ENCODE measurements at regions of chr1 and their contacts with region 1.

Region 1: DNA sequence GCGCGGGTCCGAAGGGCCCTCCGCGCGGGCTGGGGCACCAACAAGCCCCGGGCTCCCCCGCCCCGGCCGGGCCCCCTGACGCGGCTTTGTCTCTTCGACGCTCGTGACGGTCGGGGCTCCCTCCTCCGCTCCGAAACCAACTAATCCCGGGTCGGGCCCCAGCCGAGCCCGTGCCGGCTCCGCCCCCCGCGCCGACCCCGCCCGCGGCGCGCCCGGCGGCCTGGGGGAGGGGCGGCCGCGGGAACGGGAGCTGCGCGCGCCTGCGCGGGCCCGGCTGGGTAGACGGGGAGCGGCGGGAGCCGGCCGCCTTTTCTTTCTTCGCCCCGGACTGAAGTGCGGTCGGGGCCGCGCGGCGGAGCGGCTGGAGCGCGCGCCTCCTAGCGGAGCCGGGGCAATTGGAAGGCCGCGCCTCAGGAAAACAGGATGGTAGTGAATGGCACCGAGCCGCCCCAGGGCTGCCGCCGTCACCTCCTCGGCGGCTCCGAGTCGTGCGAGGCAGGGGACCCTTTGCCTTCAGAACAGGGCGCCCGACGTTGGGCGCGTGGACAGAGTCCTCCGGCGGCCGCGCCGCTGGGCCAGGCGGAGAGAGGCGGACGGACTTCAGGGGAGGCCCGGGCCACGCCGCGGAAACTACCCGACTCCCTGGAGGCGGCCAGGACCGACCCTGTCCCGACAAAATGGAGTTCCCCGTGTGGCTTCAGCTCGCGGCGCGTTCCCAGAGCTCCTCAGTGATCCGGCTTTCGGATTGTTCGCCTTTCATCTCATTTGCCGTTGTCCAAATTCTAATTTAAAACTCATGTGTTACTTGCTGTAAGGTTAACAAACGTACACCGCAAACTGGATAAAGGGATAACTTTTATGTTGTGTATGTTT is at the start of gene TP53BP2:
- DNase-seq: peak; percentile 85
- H3K4me3 ChIP-seq: peak within 1 kb of the TSS; percentile 80
- H3K27ac ChIP-seq: peak within 1 kb of the TSS; percentile 67
- H3K4me1 ChIP-seq: peaks cover 26% of the 10 kb centered on the region
- CTCF ChIP-seq: peak; percentile 69
- total RNA-seq, gene TP53BP2: 19.7 and 21.7 TPM in 2 replicates

Region 2: DNA sequence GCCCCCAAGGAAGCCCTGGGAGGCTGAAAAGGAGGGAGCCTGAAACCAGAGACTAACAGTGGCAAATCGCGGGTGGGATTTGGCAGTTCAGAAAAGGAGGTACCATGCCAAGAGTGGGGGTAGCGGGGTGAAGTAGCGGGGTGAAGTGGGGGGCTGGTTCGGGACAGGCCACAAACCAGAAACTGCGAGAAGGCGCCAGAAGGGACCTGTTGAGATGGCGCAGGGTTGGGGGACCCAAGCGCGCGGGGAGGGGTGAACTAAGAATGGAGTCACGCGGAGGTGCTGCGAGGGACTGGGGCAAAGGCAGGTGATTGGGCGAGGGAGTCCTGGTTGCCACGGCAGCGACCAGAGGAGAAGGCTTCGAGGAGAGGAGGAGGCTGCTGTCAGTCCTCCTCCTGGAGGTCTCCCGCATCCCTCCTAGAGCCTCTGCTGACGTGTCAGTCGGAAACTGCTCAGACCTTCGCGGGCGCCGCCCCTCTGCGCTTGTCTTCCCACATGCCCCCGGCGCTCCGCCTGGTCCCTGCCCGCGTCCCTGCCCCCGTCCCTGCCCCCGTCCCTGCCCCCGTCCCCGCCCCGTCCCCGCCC is 1228.6 kb before region 1 on chr1:
- CTCF ChIA-PET with region 1: no interaction called
- POLR2A ChIA-PET with region 1: no interaction called
- intact Hi-C with region 1: no loop called
- DNase-seq: peak; percentile 90
- H3K4me3 ChIP-seq: peak overlapping the region; percentile 73
- H3K27ac ChIP-seq: no peak overlapping the region
- H3K4me1 ChIP-seq: peaks cover 13% of the 10 kb centered on the region
- CTCF ChIP-seq: no peak

Region 3: GRCh38 chr1:223363856-223364684 is 482.0 kb before region 1 on chr1 and contains the start of gene SUSD4:
- CTCF ChIA-PET with region 1: no interaction called
- POLR2A ChIA-PET with region 1: no interaction called
- intact Hi-C with region 1: loop called (anchors 10 kb)
- DNase-seq: peak; percentile 62
- H3K4me3 ChIP-seq: peak within 1 kb of the TSS; percentile 67
- H3K27ac ChIP-seq: no peak within 1 kb of the TSS
- H3K4me1 ChIP-seq: peaks cover 6% of the 10 kb centered on the region
- CTCF ChIP-seq: no peak
- total RNA-seq, gene SUSD4: 0.21 TPM in 1 of 2 replicates, not detected in the other

Region 4: DNA sequence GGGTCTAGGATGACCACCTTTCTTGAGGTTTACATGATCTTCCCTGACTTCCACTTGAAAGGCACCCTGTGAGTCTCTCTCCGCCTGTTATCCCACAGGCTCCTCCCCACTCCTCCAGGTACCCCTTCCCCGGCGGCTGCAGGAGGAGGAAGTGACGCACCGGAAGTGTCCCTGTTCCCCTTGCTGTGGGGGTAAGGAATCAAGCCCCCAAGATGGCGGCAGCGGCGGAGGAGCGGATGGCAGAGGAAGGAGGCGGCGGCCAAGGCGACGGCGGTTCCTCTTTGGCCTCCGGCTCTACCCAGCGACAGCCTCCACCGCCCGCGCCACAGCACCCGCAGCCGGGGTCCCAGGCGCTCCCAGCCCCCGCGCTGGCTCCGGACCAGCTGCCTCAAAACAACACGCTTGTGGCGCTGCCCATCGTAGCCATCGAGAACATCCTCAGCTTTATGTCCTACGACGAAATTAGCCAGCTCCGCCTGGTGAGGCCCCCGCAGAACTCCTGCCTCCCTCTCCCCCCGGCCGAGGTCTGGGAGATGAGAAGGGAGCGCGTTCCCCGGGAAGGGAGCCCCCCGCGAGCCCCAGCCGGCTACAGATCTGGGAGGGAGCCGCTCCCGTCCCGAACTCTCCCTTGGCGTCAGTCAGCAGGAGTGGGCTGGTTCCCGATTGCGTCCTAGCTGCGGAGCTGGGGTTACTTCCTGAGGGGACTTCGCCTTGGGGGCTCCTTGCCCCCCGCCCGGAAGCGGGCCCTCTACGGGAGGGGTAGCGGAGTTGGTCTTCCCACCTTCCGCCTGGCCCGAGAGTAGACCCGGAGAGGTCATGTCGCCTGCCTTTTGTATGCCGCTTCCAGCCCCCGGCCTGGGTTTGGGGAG is 268.1 kb after region 1 on chr1 and contains the start of gene FBXO28:
- CTCF ChIA-PET with region 1: no interaction called
- POLR2A ChIA-PET with region 1: no interaction called
- intact Hi-C with region 1: loop called (anchors 10 kb)
- DNase-seq: peak; percentile 95
- H3K4me3 ChIP-seq: peak within 1 kb of the TSS; percentile 78
- H3K27ac ChIP-seq: peak within 1 kb of the TSS; percentile 74
- H3K4me1 ChIP-seq: peaks cover 25% of the 10 kb centered on the region
- CTCF ChIP-seq: no peak
- total RNA-seq, gene FBXO28: 23.3 and 25.1 TPM in 2 replicates

Region 5: GRCh38 chr1:224434691-224435317 is 588.8 kb after region 1 on chr1 and contains the start of gene WDR26:
- CTCF ChIA-PET with region 1: no interaction called
- POLR2A ChIA-PET with region 1: no interaction called
- intact Hi-C with region 1: loop called (anchors 10 kb)
- DNase-seq: peak; percentile 93
- H3K4me3 ChIP-seq: peak within 1 kb of the TSS; percentile 75
- H3K27ac ChIP-seq: peak within 1 kb of the TSS; percentile 44
- H3K4me1 ChIP-seq: peaks cover 51% of the 10 kb centered on the region
- CTCF ChIP-seq: no peak; the same call in 1 of the 2 replicates
- total RNA-seq, gene WDR26: 31.3 and 32.0 TPM in 2 replicates